HepG2 (cell line): ENCODE measurements at regions of chr17 and their contacts with region 1.

Region 1: GRCh38 chr17:42019509-42020404 is at the start of gene NKIRAS2:
- DNase-seq: peak; percentile 89
- ATAC-seq: peak; percentile 75
- H3K4me3 ChIP-seq: peak within 1 kb of the TSS; percentile 89 to 91 (median 89)
- H3K27ac ChIP-seq: peak within 1 kb of the TSS; percentile 64
- H3K4me1 ChIP-seq: peaks cover 62% of the 10 kb centered on the region
- H3K27me3 ChIP-seq: peaks cover 0 to 3% of the 10 kb centered on the region in 2 experiments; a peak in 1 of 5 replicates
- CTCF ChIP-seq: peak; percentile 99
- EP300 ChIP-seq: no peak; a peak in 1 of 4 replicates
- POLR2A ChIP-seq: peak; percentile 24 to 88; a peak in 3 of 4 replicates
- RAD21 ChIP-seq: peak; percentile 37; the same call in 1 of the 2 replicates
- total RNA-seq, gene NKIRAS2: 26.8 and 27.9 TPM in 2 replicates

Region 2: DNA sequence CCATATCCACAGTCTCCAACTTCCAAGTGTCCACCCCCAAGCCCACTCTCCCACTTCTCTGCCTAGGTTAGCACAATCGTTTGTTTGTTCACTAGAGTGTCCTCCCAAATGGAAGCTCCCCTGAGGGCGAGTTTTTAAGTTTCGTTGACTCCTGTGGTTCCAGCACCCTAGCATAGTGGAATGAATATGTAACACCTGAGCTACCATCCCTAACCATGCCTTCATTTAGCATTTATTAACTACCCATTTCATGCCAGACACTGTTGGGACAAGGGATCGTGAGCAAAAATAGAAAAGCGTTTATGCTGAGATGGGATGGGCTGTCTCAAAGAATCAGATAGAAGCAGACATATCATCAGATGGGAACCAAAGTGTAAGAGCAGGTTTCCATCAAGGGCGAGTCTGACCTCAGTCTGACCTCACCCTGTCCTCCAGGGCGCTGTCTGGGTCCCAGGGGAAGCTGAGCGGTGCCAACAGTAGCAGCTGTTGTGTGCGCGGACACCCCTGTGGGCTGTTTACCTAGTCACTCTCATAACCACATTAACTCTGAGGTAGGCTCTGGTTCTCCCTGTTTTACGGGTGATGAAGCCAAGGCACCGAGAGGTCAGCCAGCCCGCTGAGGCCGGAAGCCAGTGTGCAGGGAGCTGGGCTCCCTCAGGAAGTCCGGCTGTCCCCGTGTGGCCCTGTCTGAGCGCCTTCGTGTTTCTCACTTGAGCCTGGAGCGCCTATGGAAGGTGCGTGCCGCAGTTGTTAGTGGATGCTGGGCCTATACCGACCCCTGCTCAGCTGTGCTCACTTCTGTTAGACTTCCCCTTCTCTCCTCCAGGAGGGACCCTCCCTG is 47.0 kb before region 1 on chr17:
- CTCF ChIA-PET with region 1: no interaction called
- POLR2A ChIA-PET with region 1: interaction called, 180 read pairs
- in situ Hi-C with region 1: loop called (anchors 5 kb)
- intact Hi-C with region 1: no loop called
- DNase-seq: no peak
- ATAC-seq: peak; percentile 2
- H3K4me3 ChIP-seq: no peak overlapping the region
- H3K27ac ChIP-seq: no peak overlapping the region
- H3K4me1 ChIP-seq: peaks cover 38% of the 10 kb centered on the region
- H3K27me3 ChIP-seq: no peaks in the 10 kb centered on the region
- CTCF ChIP-seq: no peak
- EP300 ChIP-seq: no peak
- POLR2A ChIP-seq: peak; percentile 18 to 41; a peak in 2 of 4 replicates
- RAD21 ChIP-seq: no peak

Region 3: GRCh38 chr17:42002792-42003301 is 16.9 kb before region 1 on chr17:
- CTCF ChIA-PET with region 1: no interaction called
- POLR2A ChIA-PET with region 1: interaction called, 183 read pairs
- in situ Hi-C with region 1: no loop called
- intact Hi-C with region 1: loop called (anchors 2 kb)
- DNase-seq: peak; percentile 93
- ATAC-seq: peak; percentile 84
- H3K4me3 ChIP-seq: peak overlapping the region in 1 of 3 experiments; percentile 35; a peak in 1 of 6 replicates
- H3K27ac ChIP-seq: peak overlapping the region; percentile 77
- H3K4me1 ChIP-seq: peaks cover 42% of the 10 kb centered on the region
- H3K27me3 ChIP-seq: no peaks in the 10 kb centered on the region
- CTCF ChIP-seq: no peak
- EP300 ChIP-seq: peak in 1 of 2 experiments; percentile 39; a peak in 1 of 4 replicates
- POLR2A ChIP-seq: no peak
- RAD21 ChIP-seq: no peak

Region 4: GRCh38 chr17:42056635-42057034 is 36.9 kb after region 1 on chr17:
- CTCF ChIA-PET with region 1: no interaction called
- POLR2A ChIA-PET with region 1: no interaction called
- in situ Hi-C with region 1: no loop called
- intact Hi-C with region 1: no loop called
- DNase-seq: no peak
- ATAC-seq: no peak
- H3K4me3 ChIP-seq: no peak overlapping the region
- H3K27ac ChIP-seq: no peak overlapping the region
- H3K4me1 ChIP-seq: peaks cover 34% of the 10 kb centered on the region
- H3K27me3 ChIP-seq: no peaks in the 10 kb centered on the region; a peak in 1 of 5 replicates
- CTCF ChIP-seq: no peak
- EP300 ChIP-seq: no peak
- POLR2A ChIP-seq: no peak
- RAD21 ChIP-seq: no peak

Region 5: DNA sequence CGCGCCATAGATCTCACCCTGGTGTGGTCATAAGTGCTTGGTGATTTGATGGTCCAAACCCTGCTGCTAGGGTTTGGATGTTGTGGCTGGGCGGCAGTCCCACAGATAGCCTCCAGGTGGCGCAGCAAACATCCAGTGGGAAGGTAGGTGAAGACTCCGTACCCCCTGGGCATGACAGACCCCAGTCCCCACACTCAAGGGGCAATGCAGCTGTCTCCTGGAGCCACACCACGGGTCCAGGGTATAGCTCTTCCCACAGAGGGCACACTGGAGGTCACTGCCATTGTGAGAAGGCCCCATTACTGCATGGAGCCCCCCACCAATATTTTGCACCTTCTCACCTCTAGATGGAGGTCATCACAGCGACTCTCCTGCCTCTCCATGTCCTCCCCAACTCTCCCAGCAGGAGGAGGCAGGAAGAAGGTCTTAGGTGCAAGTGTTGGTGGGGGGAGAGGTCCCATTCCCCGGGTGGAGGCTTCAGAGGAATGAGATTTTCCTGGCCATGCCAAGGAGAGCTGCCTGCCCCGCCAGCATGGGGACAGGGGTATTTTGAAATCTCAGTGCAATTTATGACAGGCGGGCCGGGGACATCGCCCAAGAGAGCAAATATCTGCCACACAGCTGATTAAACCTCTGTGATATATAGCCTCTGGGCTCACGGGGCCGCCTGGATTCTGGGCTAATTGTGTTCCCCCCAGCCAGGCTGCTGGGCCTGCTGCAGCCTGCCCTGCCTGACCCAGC is 47.8 kb after region 1 on chr17:
- CTCF ChIA-PET with region 1: interaction called, 11 read pairs
- POLR2A ChIA-PET with region 1: no interaction called
- in situ Hi-C with region 1: no loop called
- intact Hi-C with region 1: loop called (anchors 2 kb)
- DNase-seq: peak; percentile 84
- ATAC-seq: peak; percentile 81
- H3K4me3 ChIP-seq: no peak overlapping the region
- H3K27ac ChIP-seq: no peak overlapping the region
- H3K4me1 ChIP-seq: peaks cover 13% of the 10 kb centered on the region
- H3K27me3 ChIP-seq: peaks cover 2 to 25% of the 10 kb centered on the region in 2 experiments; a peak in 3 of 5 replicates
- CTCF ChIP-seq: peak; percentile 96
- EP300 ChIP-seq: no peak
- POLR2A ChIP-seq: no peak
- RAD21 ChIP-seq: peak; percentile 96

Region 6: GRCh38 chr17:42112552-42113176 is 92.9 kb after region 1 on chr17 and contains the start of gene DHX58:
- CTCF ChIA-PET with region 1: interaction called, 20 read pairs
- POLR2A ChIA-PET with region 1: interaction called, 13 read pairs
- in situ Hi-C with region 1: no loop called
- intact Hi-C with region 1: loop called (anchors 2 kb)
- DNase-seq: peak; percentile 64
- ATAC-seq: peak; percentile 80
- H3K4me3 ChIP-seq: peak within 1 kb of the TSS; percentile 43 to 73 (median 55); a peak in 5 of 6 replicates
- H3K27ac ChIP-seq: peak within 1 kb of the TSS; percentile 51
- H3K4me1 ChIP-seq: peaks cover 40% of the 10 kb centered on the region
- H3K27me3 ChIP-seq: no peaks in the 10 kb centered on the region
- CTCF ChIP-seq: peak; percentile 8; the same call in 1 of the 2 replicates
- EP300 ChIP-seq: no peak
- POLR2A ChIP-seq: peak in 1 of 2 experiments; percentile 74; a peak in 2 of 4 replicates
- RAD21 ChIP-seq: no peak
- total RNA-seq, gene DHX58: 3.9 and 6.7 TPM in 2 replicates